Testis (tissue), 5 donors: ENCODE measurements at regions of chr16 and their contacts with region 1.

Region 1: DNA sequence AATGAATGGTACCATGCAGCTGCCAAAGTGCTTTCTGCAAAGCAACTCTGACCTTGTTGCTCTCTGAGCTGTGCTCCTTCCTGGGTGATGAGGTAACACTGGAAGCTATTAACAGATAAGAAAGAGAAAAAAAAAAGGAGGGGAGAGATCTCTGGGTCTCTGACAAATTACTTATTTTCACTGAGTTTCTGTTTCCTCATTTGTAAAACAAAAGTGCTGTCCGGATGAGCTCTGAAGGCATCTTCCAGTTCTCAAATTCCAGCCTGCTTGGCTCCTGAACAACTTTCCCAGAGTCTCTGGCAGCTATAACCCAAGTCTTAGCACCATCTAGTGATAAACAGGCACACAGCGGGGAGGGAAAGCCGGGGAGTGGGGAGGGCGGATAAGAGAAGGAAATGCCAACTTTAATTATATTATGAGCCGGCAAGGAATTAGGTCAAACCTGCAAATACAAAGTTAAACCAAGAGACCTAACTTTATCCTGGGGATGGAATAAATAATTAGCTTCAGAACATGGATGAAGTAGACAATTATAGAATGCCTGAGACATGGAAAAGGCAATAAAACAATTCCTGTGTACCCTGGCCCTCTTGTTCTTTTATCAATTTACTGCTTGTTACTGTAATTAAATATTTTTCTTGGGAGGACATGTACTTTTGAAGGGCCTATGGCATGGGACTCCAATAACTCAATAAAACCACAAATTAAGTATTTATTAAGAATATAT is 61.3 kb upstream of the KIFC3 start:
- DNase-seq: peak; percentile 85
- H3K4me3 ChIP-seq: no peak overlapping the region
- H3K27ac ChIP-seq: no peak overlapping the region
- H3K4me1 ChIP-seq: peaks cover 3% of the 10 kb centered on the region
- H3K27me3 ChIP-seq: no peaks in the 10 kb centered on the region
- CTCF ChIP-seq: peak in 1 of 3 experiments; percentile 48
- POLR2A ChIP-seq: no peak

Region 2: GRCh38 chr16:57764341-57765159 is 99.0 kb before region 1 on chr16:
- intact Hi-C with region 1: loop called (anchors 5 kb)
- DNase-seq: peak; percentile 46
- H3K4me3 ChIP-seq: no peak overlapping the region
- H3K27ac ChIP-seq: no peak overlapping the region
- H3K4me1 ChIP-seq: no peaks in the 10 kb centered on the region
- H3K27me3 ChIP-seq: no peaks in the 10 kb centered on the region
- CTCF ChIP-seq: no peak
- POLR2A ChIP-seq: no peak